Endothelial cell of umbilical vein (primary cell): ENCODE measurements at regions of chr12 and their contacts with region 1.

Region 1: GRCh38 chr12:106955377-106956047 is at the start of gene TMEM263:
- DNase-seq: peak; percentile 99
- H3K4me3 ChIP-seq: peak within 1 kb of the TSS; percentile 86 to 99 (median 97)
- H3K27ac ChIP-seq: peak within 1 kb of the TSS; percentile 87
- H3K4me1 ChIP-seq: peaks cover 12% of the 10 kb centered on the region
- H3K27me3 ChIP-seq: peaks cover 0 to 1% of the 10 kb centered on the region in 2 experiments
- CTCF ChIP-seq: no peak
- POLR2A ChIP-seq: peak; percentile 97
- total RNA-seq, gene TMEM263: 68.8 and 72.5 TPM in 2 replicates

Region 2: DNA sequence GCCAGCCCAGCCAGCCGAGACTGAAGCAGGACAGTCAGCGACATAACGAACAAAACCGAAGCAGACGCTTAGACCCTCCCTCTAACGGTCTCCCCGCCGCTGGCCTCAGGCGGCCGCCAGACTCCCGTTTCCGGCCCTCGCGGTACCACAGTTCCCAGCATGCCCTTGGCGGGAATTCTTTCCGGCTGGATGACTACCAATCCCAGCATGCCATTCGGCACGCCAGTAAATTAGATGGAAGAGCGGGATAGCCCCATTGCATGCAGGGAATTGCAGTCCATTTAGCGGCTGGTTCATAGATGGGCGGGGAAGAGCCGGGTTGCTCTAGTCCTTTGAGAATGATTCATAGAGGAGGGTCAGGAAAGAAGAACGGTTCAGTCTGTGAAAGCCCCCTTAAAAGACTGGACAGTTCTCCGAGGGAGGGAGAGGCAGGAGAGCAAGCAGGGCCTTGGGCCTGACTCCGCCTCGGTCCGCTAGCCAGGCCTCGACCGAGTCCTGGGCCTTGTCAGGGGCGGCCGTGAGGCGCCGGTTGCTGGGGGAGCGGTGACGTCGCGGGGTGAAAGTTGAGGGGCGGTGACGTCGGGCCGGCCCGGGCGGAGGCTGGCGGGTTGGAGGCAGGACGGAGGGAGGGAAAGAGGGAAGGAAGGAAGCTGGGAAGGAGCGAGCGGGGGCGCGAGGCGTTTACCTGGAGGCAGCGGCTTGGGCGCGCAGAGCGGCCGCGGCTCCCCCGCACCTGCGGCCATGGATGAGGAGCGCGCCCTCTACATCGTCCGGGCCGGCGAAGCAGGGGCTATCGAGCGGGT is 181.3 kb before region 1 on chr12 and contains the start of gene RIC8B:
- CTCF ChIA-PET with region 1: no interaction called
- POLR2A ChIA-PET with region 1: interaction called, 4 read pairs
- dilution Hi-C with region 1: no loop called
- intact Hi-C with region 1: loop called (anchors 1 kb)
- DNase-seq: peak; percentile 99
- H3K4me3 ChIP-seq: peak within 1 kb of the TSS; percentile 52 to 84 (median 74)
- H3K27ac ChIP-seq: peak within 1 kb of the TSS; percentile 91
- H3K4me1 ChIP-seq: peaks cover 12% of the 10 kb centered on the region
- H3K27me3 ChIP-seq: no peaks in the 10 kb centered on the region
- CTCF ChIP-seq: peak in 1 of 2 donors; percentile 2
- POLR2A ChIP-seq: peak; percentile 91
- total RNA-seq, gene RIC8B: 13.7 and 16.5 TPM in 2 replicates

Region 3: DNA sequence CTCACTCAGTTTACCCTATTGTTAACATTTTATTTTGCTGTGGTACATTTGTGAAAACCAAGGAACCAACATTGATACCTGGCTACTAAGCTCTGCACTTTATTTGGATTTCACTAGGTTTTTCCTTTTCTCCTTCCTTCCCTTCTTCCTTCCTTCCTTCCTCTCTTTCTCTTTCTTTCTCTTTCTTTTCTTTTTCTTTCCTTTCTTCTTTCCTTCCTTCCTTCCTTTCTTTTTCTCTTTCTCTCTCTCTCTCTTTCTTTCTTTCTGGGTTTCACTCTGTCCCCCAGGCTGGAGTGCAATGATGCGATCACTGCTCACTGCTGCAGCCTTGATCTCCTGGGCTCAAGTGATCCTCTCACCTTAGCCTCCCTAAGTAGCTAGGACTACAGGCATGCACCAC is 28.9 kb before region 1 on chr12:
- CTCF ChIA-PET with region 1: no interaction called
- POLR2A ChIA-PET with region 1: no interaction called
- dilution Hi-C with region 1: no loop called
- intact Hi-C with region 1: no loop called
- DNase-seq: no peak
- H3K4me3 ChIP-seq: no peak overlapping the region
- H3K27ac ChIP-seq: no peak overlapping the region
- H3K4me1 ChIP-seq: no peaks in the 10 kb centered on the region
- H3K27me3 ChIP-seq: peaks cover 6 to 12% of the 10 kb centered on the region in 2 experiments
- CTCF ChIP-seq: no peak
- POLR2A ChIP-seq: no peak

Region 4: GRCh38 chr12:106978035-106978800 is 22.7 kb after region 1 on chr12:
- CTCF ChIA-PET with region 1: interaction called, 10 read pairs
- POLR2A ChIA-PET with region 1: interaction called, 10 read pairs
- dilution Hi-C with region 1: no loop called
- intact Hi-C with region 1: loop called (anchors 2 kb)
- DNase-seq: no peak
- H3K4me3 ChIP-seq: no peak overlapping the region
- H3K27ac ChIP-seq: no peak overlapping the region
- H3K4me1 ChIP-seq: peaks cover 24% of the 10 kb centered on the region
- H3K27me3 ChIP-seq: no peaks in the 10 kb centered on the region
- CTCF ChIP-seq: no peak
- POLR2A ChIP-seq: no peak

Region 5: GRCh38 chr12:106986625-106987430 is 31.3 kb after region 1 on chr12 and contains the start of gene MTERF2:
- CTCF ChIA-PET with region 1: interaction called, 7 read pairs
- POLR2A ChIA-PET with region 1: interaction called, 21 read pairs
- dilution Hi-C with region 1: no loop called
- intact Hi-C with region 1: loop called (anchors 1 kb)
- DNase-seq: peak; percentile 97
- H3K4me3 ChIP-seq: peak within 1 kb of the TSS; percentile 62 to 79 (median 78)
- H3K27ac ChIP-seq: peak within 1 kb of the TSS; percentile 68
- H3K4me1 ChIP-seq: peaks cover 16% of the 10 kb centered on the region
- H3K27me3 ChIP-seq: no peaks in the 10 kb centered on the region
- CTCF ChIP-seq: no peak
- POLR2A ChIP-seq: peak; percentile 54
- total RNA-seq, gene MTERF2: 6.7 and 9.6 TPM in 2 replicates

Region 6: GRCh38 chr12:107027636-107028053 is 72.1 kb after region 1 on chr12:
- CTCF ChIA-PET with region 1: no interaction called
- POLR2A ChIA-PET with region 1: no interaction called
- dilution Hi-C with region 1: no loop called
- intact Hi-C with region 1: loop called (anchors 1 kb)
- DNase-seq: peak; percentile 95
- H3K4me3 ChIP-seq: no peak overlapping the region
- H3K27ac ChIP-seq: peak overlapping the region; percentile 81
- H3K4me1 ChIP-seq: peaks cover 17% of the 10 kb centered on the region
- H3K27me3 ChIP-seq: no peaks in the 10 kb centered on the region
- CTCF ChIP-seq: no peak
- POLR2A ChIP-seq: no peak

Region 7: GRCh38 chr12:107057071-107057818 is 101.7 kb after region 1 on chr12:
- CTCF ChIA-PET with region 1: no interaction called
- POLR2A ChIA-PET with region 1: no interaction called
- dilution Hi-C with region 1: no loop called
- intact Hi-C with region 1: loop called (anchors 2 kb)
- DNase-seq: peak; percentile 80
- H3K4me3 ChIP-seq: peak overlapping the region in 1 of 3 experiments; percentile 47
- H3K27ac ChIP-seq: peak overlapping the region; percentile 51
- H3K4me1 ChIP-seq: peaks cover 16% of the 10 kb centered on the region
- H3K27me3 ChIP-seq: no peaks in the 10 kb centered on the region
- CTCF ChIP-seq: no peak
- POLR2A ChIP-seq: no peak

Region 8: DNA sequence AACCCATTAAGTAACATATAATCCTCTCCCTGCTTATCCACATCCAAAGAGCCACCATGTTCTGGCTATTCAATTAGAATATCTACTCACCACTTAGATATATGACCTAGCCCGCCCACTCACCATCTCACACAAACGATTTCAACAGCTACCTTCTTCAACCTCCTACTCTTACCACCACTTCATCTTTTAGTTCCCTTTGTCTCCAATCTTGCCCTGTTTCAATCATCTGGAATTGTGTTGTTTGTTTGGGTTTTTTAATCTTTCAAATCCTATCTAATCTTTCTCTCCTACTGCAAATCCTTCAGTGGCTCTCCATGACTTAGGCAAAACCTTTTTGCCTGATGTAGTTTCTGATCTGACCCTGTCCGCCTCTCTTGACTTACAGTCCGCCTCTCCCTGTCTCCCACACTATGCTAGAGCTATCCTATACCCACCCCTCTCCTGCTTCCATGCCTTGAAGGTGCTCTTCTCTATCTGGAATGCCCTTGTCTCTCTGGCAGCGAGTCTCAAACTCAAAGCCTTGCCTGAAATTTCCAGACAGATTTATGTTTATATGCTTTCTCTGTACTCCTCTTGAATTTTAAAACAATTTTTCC is 298.8 kb after region 1 on chr12:
- CTCF ChIA-PET with region 1: no interaction called
- POLR2A ChIA-PET with region 1: no interaction called
- dilution Hi-C with region 1: no loop called
- intact Hi-C with region 1: no loop called
- DNase-seq: no peak
- H3K4me3 ChIP-seq: no peak overlapping the region
- H3K27ac ChIP-seq: no peak overlapping the region
- H3K4me1 ChIP-seq: no peaks in the 10 kb centered on the region
- H3K27me3 ChIP-seq: peaks cover 0 to 3% of the 10 kb centered on the region in 2 experiments
- CTCF ChIP-seq: no peak
- POLR2A ChIP-seq: no peak

Region 9: DNA sequence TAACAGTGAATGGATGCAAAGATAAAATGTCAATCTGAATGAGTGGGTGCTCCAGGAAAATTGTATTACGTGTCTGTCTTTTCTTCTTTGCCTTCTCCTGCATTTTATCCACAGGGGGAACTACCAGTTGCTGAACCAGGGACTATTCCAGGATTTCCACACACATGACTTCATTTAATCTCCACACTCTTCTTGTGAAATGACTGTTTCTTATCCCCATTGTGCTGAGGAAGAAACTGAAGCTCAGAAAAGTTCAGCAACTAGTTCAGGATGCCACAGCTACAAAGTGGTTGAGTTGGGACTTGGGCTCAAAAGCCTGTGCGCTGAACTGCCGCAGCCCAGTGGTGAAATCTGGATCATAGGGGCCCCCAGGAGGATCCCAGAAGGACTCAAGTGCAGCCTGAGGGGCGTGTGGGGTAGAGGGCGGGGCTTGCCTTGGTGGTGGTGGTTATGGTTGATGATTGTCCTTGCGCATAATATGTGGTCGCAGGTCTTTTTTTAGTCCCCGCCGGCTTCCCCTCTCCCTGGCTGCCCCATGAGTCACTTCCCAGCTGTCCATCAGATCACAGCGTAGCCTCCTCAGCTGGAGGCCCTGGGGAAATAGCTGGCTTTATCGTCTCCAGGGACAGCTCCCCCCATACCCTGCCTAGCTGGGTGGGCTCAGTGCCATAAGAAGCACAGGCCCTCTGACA is 373.1 kb after region 1 on chr12:
- CTCF ChIA-PET with region 1: no interaction called
- POLR2A ChIA-PET with region 1: no interaction called
- dilution Hi-C with region 1: no loop called
- intact Hi-C with region 1: no loop called
- DNase-seq: peak; percentile 45
- H3K4me3 ChIP-seq: no peak overlapping the region
- H3K27ac ChIP-seq: no peak overlapping the region
- H3K4me1 ChIP-seq: peaks cover 9% of the 10 kb centered on the region
- H3K27me3 ChIP-seq: peaks cover 8 to 10% of the 10 kb centered on the region in 2 experiments
- CTCF ChIP-seq: no peak
- POLR2A ChIP-seq: no peak